Aorta (tissue), 5 donors: ENCODE measurements at regions of chr9 and their contacts with region 1.

Region 1: GRCh38 chr9:131739980-131740648 is at the start of gene RAPGEF1:
- DNase-seq: peak; percentile 75 to 95
- ATAC-seq: peak; percentile 92
- H3K4me3 ChIP-seq: peak within 1 kb of the TSS; percentile 91 to 97
- H3K27ac ChIP-seq: peak within 1 kb of the TSS; percentile 52 to 61
- H3K4me1 ChIP-seq: peaks cover 0 to 3% of the 10 kb centered on the region in 2 donors
- H3K27me3 ChIP-seq: no peaks in the 10 kb centered on the region
- total RNA-seq, gene RAPGEF1: 85.9 to 93.2 TPM

Region 2: DNA sequence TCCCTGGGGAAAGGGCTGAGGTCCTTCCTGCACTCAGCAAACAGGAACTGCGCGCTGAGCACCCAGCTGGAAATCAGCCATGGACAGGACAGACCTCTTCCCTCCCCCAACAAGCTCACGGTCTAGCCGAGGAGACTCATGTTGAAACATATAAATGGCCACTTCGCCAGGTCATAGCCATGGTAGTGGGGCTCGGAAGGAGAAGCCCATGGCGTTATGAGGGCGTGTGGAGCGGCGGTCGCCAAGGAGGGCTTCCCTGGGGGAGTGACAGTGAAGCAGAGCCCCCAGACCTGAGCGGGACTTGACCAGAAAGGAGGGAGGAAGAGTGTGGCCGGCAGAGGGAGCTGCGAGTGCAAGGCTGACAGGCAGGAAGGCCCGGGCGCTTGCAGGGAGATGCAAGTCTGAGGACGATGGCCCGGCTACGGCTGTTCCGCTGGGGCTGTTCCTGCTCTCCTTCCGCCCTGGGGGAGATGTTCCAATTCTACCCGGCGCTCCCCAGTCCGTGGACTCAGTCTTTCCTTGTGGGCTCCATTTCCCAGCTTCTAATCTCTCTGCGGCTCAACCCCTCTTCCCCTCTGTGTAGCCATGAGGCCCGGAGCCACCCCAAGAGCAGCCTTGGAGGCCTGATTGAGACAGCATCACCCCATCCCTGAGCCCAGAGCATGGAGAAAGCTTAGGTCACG is 390.1 kb before region 1 on chr9:
- intact Hi-C with region 1: loop called (anchors 10 kb)
- DNase-seq: peak; percentile 94 to 97
- ATAC-seq: peak; percentile 93
- H3K4me3 ChIP-seq: no peak overlapping the region
- H3K27ac ChIP-seq: no peak overlapping the region
- H3K4me1 ChIP-seq: no peaks in the 10 kb centered on the region
- H3K27me3 ChIP-seq: no peaks in the 10 kb centered on the region

Region 3: GRCh38 chr9:131370638-131371037 is 369.5 kb before region 1 on chr9:
- intact Hi-C with region 1: loop called in 1 of 2 experiments (anchors 10 kb)
- DNase-seq: no peak
- ATAC-seq: no peak
- H3K4me3 ChIP-seq: no peak overlapping the region
- H3K27ac ChIP-seq: no peak overlapping the region
- H3K4me1 ChIP-seq: peaks cover 0 to 2% of the 10 kb centered on the region in 2 donors
- H3K27me3 ChIP-seq: no peaks in the 10 kb centered on the region

Region 4: DNA sequence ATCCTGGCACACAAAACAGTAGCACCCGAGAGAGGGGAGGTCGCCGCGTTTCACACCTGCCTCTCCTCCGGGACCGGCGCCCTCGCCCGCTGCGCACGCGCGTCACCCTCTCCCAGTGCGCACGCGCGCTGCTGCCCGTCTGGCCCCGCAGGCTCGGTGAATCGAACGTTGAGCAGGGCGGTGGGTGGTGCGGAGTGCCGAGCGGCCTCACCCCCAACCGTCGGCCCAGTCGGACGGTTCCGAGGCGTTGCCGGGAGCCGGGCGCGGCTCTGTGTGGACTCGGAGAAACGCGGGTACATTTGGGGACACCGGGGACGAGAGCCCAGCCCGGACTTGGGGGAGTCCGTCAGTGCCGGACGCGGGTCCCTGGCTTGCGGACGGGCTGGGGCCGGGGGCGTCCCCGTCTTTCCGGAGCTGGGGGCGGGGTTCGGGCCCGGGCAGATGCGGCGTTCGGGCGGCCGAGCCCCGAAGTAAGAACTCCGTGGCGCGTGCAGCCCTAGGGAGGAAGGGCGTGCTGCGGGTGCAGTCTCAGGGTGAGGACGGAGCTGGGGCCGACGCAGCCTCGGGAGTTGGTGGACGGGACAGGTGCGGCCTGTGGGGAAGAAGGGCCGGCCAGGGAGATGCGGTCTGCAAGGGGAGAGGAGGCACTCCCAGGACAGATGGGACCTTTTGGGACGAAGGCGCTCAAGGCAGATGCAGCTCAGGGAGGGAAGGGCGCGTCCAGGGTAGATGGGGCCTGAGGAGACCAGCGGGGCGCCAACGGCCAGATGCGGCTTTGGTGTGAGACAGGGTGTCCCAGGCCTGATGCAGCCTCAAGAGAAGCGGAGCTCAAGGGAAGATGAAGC is 237.1 kb before region 1 on chr9 and contains the start of gene POMT1:
- intact Hi-C with region 1: loop called in 1 of 2 experiments (anchors 10 kb)
- DNase-seq: peak; percentile 91 to 95
- ATAC-seq: peak; percentile 95
- H3K4me3 ChIP-seq: peak within 1 kb of the TSS; percentile 35 to 48
- H3K27ac ChIP-seq: no peak within 1 kb of the TSS
- H3K4me1 ChIP-seq: no peaks in the 10 kb centered on the region
- H3K27me3 ChIP-seq: no peaks in the 10 kb centered on the region
- total RNA-seq, gene POMT1: 22.0 to 33.1 TPM

Region 5: GRCh38 chr9:131590908-131591844 is 148.9 kb before region 1 on chr9:
- intact Hi-C with region 1: loop called (anchors 1 kb)
- DNase-seq: peak; percentile 86 to 94
- ATAC-seq: peak; percentile 90
- H3K4me3 ChIP-seq: no peak overlapping the region
- H3K27ac ChIP-seq: no peak overlapping the region
- H3K4me1 ChIP-seq: no peaks in the 10 kb centered on the region
- H3K27me3 ChIP-seq: no peaks in the 10 kb centered on the region

Region 6: GRCh38 chr9:131608493-131609037 is 131.5 kb before region 1 on chr9:
- intact Hi-C with region 1: loop called in 1 of 2 experiments (anchors 5 kb)
- DNase-seq: peak; percentile 85 to 91
- ATAC-seq: peak; percentile 79
- H3K4me3 ChIP-seq: no peak overlapping the region
- H3K27ac ChIP-seq: peak overlapping the region; percentile 17 to 95
- H3K4me1 ChIP-seq: peaks cover 0 to 2% of the 10 kb centered on the region in 2 donors
- H3K27me3 ChIP-seq: no peaks in the 10 kb centered on the region

Region 7: GRCh38 chr9:131678499-131679111 is 61.5 kb before region 1 on chr9:
- intact Hi-C with region 1: loop called in 1 of 2 experiments (anchors 5 kb)
- DNase-seq: peak; percentile 89 to 90
- ATAC-seq: peak; percentile 90
- H3K4me3 ChIP-seq: no peak overlapping the region
- H3K27ac ChIP-seq: peak overlapping the region; percentile 86 to 98
- H3K4me1 ChIP-seq: peaks cover 1 to 12% of the 10 kb centered on the region in 2 donors
- H3K27me3 ChIP-seq: no peaks in the 10 kb centered on the region